ENCODE measurements at regions of chr6 and their contacts with region 1.

Region 1: GRCh38 chr6:135183532-135184440 is 2.7 kb downstream of the MYB start:
- DNase-seq: peak; percentile 57 to 81 (median 76)
- ATAC-seq: peak; percentile 68
- H3K4me3 ChIP-seq: peak overlapping the region; percentile 56
- H3K4me3 Mint-ChIP-seq: peak overlapping the region; percentile 85 to 98 (median 90)
- H3K27ac ChIP-seq: peak overlapping the region; percentile 74
- H3K27ac Mint-ChIP-seq: peak overlapping the region; percentile 38 to 96 (median 86)
- H3K4me1 ChIP-seq: peaks cover 0 to 4% of the 10 kb centered on the region in 2 donors
- H3K4me1 Mint-ChIP-seq: peaks cover 16 to 42% (median 22%) of the 10 kb centered on the region in 7 donors
- H3K27me3 ChIP-seq: no peaks in the 10 kb centered on the region
- H3K27me3 Mint-ChIP-seq: no peaks in the 10 kb centered on the region

Region 2: DNA sequence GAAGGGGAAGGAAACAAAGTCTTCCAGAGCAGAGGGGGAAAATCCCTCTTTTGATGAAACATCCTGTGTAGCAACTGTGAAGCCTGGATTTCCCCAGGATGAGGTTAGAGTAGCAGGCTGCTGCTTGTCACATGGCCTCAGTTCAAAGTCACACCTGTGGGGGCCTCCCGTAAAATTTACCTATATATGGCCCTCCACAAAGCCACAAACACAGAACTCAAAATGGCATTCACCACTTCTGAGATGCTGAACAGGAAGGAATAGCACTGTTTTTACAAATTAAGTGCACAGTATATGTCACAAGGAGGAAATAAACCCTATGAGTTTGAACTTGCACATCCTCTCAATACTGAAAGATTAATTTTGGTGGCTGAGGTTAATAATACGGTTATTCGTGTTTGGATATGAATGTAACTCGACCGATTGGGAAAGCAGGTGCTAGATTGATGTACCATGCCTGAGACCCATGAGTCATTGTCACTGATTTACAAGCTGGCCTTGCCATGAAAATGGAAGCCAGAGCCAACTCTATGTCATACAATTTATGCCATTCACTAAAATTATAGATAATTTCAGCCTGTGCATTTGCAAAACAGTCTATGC is 936.5 kb before region 1 on chr6:
- CTCF ChIA-PET with region 1: no interaction called
- POLR2A ChIA-PET with region 1: no interaction called
- intact Hi-C with region 1: loop called in 1 of 2 experiments (anchors 5 kb)
- DNase-seq: peak in 8 of 9 donors; percentile 67 to 96 (median 93)
- ATAC-seq: peak; percentile 97
- H3K4me3 ChIP-seq: peak overlapping the region; percentile 21
- H3K4me3 Mint-ChIP-seq: peak overlapping the region; percentile 50 to 84 (median 75)
- H3K27ac ChIP-seq: peak overlapping the region; percentile 77
- H3K27ac Mint-ChIP-seq: peak overlapping the region; percentile 83 to 99 (median 94)
- H3K4me1 ChIP-seq: peaks cover 34 to 60% of the 10 kb centered on the region in 2 donors
- H3K4me1 Mint-ChIP-seq: peaks cover 30 to 75% (median 63%) of the 10 kb centered on the region in 7 donors
- H3K27me3 ChIP-seq: no peaks in the 10 kb centered on the region
- H3K27me3 Mint-ChIP-seq: no peaks in the 10 kb centered on the region

Region 3: DNA sequence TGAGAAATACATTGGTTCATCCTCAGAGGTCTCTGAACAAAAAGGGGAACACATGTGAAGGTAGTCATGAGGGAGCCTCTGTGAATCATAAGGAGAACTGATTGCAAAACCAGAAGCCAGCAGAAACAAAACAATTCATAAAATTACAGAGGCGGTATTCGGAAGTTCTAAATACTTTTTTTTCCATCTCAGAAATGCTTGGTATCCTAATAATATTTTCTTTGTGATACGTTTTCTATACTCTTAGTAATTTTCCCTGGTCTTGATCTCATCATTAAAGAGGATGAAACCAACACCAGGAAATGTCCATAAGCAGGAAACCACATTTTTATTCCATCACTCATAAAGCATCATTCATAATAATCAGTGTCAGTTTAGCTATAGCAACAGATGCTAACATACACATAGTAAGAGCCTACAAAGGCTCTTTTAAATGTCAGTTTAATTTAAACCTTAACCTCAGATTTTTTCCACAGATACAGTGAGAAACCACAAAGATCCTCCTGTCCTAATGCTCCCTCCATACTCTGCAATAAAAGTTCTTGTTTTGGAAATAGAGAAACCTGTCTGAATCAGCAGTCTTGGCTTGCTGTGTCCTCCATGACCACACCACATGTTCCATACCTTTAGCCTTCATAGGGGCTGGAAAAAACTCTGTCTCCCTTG is 895.1 kb before region 1 on chr6:
- CTCF ChIA-PET with region 1: no interaction called
- POLR2A ChIA-PET with region 1: no interaction called
- intact Hi-C with region 1: no loop called
- DNase-seq: peak in 4 of 9 donors; percentile 6 to 50 (median 28)
- ATAC-seq: peak; percentile 81
- H3K4me3 ChIP-seq: no peak overlapping the region
- H3K4me3 Mint-ChIP-seq: peak overlapping the region in 7 of 10 donors; percentile 7 to 74 (median 46)
- H3K27ac ChIP-seq: no peak overlapping the region
- H3K27ac Mint-ChIP-seq: peak overlapping the region in 8 of 9 donors; percentile 23 to 87 (median 70)
- H3K4me1 ChIP-seq: peaks cover 7 to 9% of the 10 kb centered on the region in 2 donors
- H3K4me1 Mint-ChIP-seq: peaks cover 14 to 41% (median 20%) of the 10 kb centered on the region in 7 donors
- H3K27me3 ChIP-seq: no peaks in the 10 kb centered on the region
- H3K27me3 Mint-ChIP-seq: no peaks in the 10 kb centered on the region

Region 4: DNA sequence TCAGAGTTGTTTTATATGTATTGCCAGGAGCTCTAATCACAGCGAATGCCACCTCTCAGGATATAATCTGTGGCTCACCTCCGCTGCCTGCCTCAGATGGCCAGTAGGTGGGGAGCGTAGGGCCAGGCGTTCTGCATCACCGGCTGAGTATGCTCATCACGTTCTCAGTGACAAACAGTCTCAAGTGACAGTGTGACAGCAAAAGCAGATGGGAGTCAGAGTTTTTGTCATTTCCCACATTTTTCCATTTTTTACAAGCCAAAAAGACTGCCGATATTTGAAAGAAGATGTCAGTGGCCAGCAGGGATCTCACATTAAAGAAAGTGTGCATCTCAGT is 442.6 kb before region 1 on chr6:
- CTCF ChIA-PET with region 1: no interaction called
- POLR2A ChIA-PET with region 1: no interaction called
- intact Hi-C with region 1: no loop called
- DNase-seq: no peak
- ATAC-seq: no peak
- H3K4me3 ChIP-seq: no peak overlapping the region
- H3K4me3 Mint-ChIP-seq: no peak overlapping the region
- H3K27ac ChIP-seq: no peak overlapping the region
- H3K27ac Mint-ChIP-seq: peak overlapping the region in 1 of 9 donors; percentile 2
- H3K4me1 ChIP-seq: no peaks in the 10 kb centered on the region
- H3K4me1 Mint-ChIP-seq: no peaks in the 10 kb centered on the region
- H3K27me3 ChIP-seq: no peaks in the 10 kb centered on the region
- H3K27me3 Mint-ChIP-seq: peaks cover 0 to 53% (median 14%) of the 10 kb centered on the region in 5 donors

Region 5: DNA sequence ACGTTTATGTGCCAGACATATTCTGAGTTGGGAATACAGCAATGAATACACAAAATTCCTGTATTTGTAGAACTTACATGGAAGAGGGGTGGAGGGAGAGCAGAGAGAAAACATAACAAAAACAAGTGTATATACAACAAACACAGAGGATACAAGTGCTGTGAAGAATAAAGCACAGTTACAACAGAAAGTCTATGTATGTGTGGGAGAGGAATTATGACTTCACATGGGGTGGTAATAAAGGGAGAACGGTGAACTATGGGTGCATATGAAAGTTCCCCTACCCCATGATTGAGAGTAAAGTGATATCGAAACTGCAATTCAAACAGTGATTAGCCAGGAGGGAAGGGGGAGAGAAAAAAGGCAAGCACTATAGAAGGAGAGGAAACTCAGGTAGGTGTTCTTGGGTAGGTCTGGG is 153.7 kb before region 1 on chr6:
- CTCF ChIA-PET with region 1: no interaction called
- POLR2A ChIA-PET with region 1: no interaction called
- intact Hi-C with region 1: loop called in 1 of 2 experiments (anchors 5 kb)
- DNase-seq: peak in 7 of 9 donors; percentile 29 to 61 (median 45)
- ATAC-seq: peak; percentile 91
- H3K4me3 ChIP-seq: peak overlapping the region; percentile 36
- H3K4me3 Mint-ChIP-seq: peak overlapping the region; percentile 60 to 79 (median 65)
- H3K27ac ChIP-seq: peak overlapping the region; percentile 65
- H3K27ac Mint-ChIP-seq: peak overlapping the region; percentile 60 to 97 (median 86)
- H3K4me1 ChIP-seq: peaks cover 7 to 11% of the 10 kb centered on the region in 2 donors
- H3K4me1 Mint-ChIP-seq: peaks cover 31 to 92% (median 79%) of the 10 kb centered on the region in 7 donors
- H3K27me3 ChIP-seq: no peaks in the 10 kb centered on the region
- H3K27me3 Mint-ChIP-seq: no peaks in the 10 kb centered on the region

Region 6: GRCh38 chr6:135094403-135094848 is 89.4 kb before region 1 on chr6:
- CTCF ChIA-PET with region 1: interaction called, 5 read pairs
- POLR2A ChIA-PET with region 1: interaction called, 8 read pairs
- intact Hi-C with region 1: loop called in 1 of 2 experiments (anchors 1 kb)
- DNase-seq: peak in 6 of 9 donors; percentile 57 to 75 (median 64)
- ATAC-seq: peak; percentile 88
- H3K4me3 ChIP-seq: no peak overlapping the region
- H3K4me3 Mint-ChIP-seq: peak overlapping the region; percentile 3 to 70 (median 54)
- H3K27ac ChIP-seq: peak overlapping the region; percentile 56
- H3K27ac Mint-ChIP-seq: peak overlapping the region; percentile 80 to 98 (median 90)
- H3K4me1 ChIP-seq: peaks cover 17 to 41% of the 10 kb centered on the region in 2 donors
- H3K4me1 Mint-ChIP-seq: peaks cover 19 to 95% (median 79%) of the 10 kb centered on the region in 7 donors
- H3K27me3 ChIP-seq: no peaks in the 10 kb centered on the region
- H3K27me3 Mint-ChIP-seq: no peaks in the 10 kb centered on the region

Region 7: DNA sequence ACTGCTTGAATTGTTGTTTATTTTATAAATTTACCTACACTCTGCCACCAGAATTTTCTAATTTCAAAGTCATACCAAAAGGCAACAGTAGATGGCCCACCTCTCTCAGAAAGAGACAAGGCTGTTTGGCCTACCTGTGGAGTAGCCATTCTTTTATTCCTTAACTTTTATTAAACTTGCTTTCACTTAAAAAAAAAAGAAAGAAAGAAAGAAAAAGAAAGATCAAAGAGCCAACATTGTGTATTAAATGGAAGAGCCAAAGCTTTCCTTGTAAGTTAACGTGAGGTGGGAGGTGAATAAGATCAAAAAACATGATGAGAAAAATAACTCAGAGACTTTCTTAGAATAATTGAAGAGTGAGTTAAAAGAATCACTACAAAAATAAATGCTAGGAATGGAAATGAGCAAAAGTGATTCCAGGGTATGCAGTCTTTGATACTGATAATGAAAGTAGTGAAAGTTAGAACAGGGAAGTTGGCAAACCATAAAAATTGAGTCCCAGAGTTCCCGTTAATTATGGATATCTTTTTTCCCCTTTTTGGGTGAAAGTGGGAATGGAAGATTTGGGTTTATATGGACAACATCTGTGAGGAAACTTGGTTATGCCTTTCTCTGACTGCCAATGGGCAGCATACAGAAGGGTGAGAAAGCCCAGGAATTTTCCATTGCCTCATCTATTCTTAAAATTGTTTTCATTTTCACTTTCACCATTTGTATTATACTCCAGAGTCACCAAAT is 38.6 kb before region 1 on chr6:
- CTCF ChIA-PET with region 1: interaction called, 59 read pairs
- POLR2A ChIA-PET with region 1: interaction called, 9 read pairs
- intact Hi-C with region 1: loop called (anchors 1 kb)
- DNase-seq: peak in 6 of 9 donors; percentile 14 to 51 (median 48)
- ATAC-seq: peak; percentile 74
- H3K4me3 ChIP-seq: peak overlapping the region; percentile 23
- H3K4me3 Mint-ChIP-seq: peak overlapping the region in 9 of 10 donors; percentile 39 to 81 (median 61)
- H3K27ac ChIP-seq: peak overlapping the region; percentile 41
- H3K27ac Mint-ChIP-seq: peak overlapping the region; percentile 54 to 91 (median 86)
- H3K4me1 ChIP-seq: peaks cover 0 to 35% of the 10 kb centered on the region in 2 donors
- H3K4me1 Mint-ChIP-seq: peaks cover 28 to 76% (median 56%) of the 10 kb centered on the region in 7 donors
- H3K27me3 ChIP-seq: no peaks in the 10 kb centered on the region
- H3K27me3 Mint-ChIP-seq: no peaks in the 10 kb centered on the region

Region 8: DNA sequence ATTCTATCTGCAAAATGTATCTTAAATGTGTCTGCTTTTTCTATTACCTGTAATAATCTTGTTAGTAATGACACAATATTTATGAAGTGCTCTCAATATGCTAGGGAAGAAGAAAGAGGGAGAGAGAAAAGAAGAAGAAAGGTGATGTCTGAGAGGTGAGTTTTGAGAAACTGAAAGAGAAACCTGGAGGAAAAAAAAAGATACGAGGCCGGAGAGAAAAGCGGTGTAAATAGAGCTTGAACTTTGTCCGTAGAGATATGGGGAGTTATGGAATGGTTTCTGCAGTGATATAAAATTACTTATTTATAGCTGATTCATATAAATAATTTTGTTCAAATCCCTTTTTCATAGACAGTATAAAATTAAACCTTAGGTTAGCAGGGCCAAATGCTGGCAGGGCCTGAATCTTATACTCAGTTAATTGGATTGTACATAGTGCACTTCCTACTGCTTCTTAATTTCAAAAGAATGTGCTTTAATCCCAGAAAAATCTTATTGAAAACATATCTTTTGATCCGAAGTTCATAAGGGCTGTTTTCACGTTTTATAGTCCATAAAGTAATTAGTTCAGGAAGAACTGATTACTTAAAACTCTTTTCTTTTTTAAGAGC is 40.4 kb after region 1 on chr6:
- CTCF ChIA-PET with region 1: no interaction called
- POLR2A ChIA-PET with region 1: no interaction called
- intact Hi-C with region 1: loop called in 1 of 2 experiments (anchors 5 kb)
- DNase-seq: peak in 6 of 9 donors; percentile 16 to 40 (median 32)
- ATAC-seq: peak; percentile 32
- H3K4me3 ChIP-seq: peak overlapping the region; percentile 33
- H3K4me3 Mint-ChIP-seq: peak overlapping the region; percentile 54 to 90 (median 86)
- H3K27ac ChIP-seq: peak overlapping the region; percentile 64
- H3K27ac Mint-ChIP-seq: peak overlapping the region; percentile 90 to 96 (median 92)
- H3K4me1 ChIP-seq: peaks cover 0 to 3% of the 10 kb centered on the region in 2 donors
- H3K4me1 Mint-ChIP-seq: peaks cover 13 to 34% (median 21%) of the 10 kb centered on the region in 7 donors
- H3K27me3 ChIP-seq: no peaks in the 10 kb centered on the region
- H3K27me3 Mint-ChIP-seq: no peaks in the 10 kb centered on the region

Region 9: DNA sequence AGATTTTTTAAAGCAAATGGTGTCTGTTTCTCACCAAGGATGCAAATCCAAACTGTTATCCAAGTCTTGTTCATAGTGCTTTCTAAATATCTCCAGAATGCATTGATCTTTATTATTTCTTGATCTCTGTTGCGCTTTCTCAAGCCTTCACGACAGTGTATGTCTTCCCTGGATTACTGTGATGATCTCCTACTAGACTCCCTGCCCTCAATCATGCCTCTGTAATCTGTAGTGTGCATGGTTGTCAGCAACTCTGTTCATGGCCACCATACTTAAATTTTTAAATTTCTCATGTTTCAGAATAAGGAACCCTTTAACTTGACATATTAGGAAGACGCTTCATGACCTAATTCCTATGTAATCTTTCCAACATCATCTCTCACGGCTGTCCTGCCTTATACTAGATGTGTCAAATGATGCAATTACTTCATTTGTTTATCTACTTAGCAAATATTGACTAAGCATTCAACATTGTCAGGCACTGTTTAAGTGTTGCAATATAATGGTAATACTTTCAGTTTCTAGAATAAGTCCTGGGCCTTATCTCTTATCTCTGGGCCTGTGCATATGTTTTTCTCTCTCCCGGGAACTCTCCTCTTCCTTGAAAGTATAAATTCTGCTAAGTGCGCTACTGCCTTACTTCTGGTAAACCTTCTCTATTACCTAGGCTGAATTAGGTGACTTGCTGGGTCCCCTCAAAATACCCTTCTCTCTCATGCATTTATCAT is 339.3 kb after region 1 on chr6:
- CTCF ChIA-PET with region 1: no interaction called
- POLR2A ChIA-PET with region 1: no interaction called
- intact Hi-C with region 1: no loop called
- DNase-seq: no peak
- ATAC-seq: peak; percentile 48
- H3K4me3 ChIP-seq: no peak overlapping the region
- H3K4me3 Mint-ChIP-seq: no peak overlapping the region
- H3K27ac ChIP-seq: no peak overlapping the region
- H3K27ac Mint-ChIP-seq: peak overlapping the region in 1 of 9 donors; percentile 50
- H3K4me1 ChIP-seq: no peaks in the 10 kb centered on the region
- H3K4me1 Mint-ChIP-seq: peaks cover 0 to 11% (median 0%) of the 10 kb centered on the region in 7 donors
- H3K27me3 ChIP-seq: no peaks in the 10 kb centered on the region
- H3K27me3 Mint-ChIP-seq: no peaks in the 10 kb centered on the region